ENCODE measurements at regions of chr17 and their contacts with region 1.

Region 1: DNA sequence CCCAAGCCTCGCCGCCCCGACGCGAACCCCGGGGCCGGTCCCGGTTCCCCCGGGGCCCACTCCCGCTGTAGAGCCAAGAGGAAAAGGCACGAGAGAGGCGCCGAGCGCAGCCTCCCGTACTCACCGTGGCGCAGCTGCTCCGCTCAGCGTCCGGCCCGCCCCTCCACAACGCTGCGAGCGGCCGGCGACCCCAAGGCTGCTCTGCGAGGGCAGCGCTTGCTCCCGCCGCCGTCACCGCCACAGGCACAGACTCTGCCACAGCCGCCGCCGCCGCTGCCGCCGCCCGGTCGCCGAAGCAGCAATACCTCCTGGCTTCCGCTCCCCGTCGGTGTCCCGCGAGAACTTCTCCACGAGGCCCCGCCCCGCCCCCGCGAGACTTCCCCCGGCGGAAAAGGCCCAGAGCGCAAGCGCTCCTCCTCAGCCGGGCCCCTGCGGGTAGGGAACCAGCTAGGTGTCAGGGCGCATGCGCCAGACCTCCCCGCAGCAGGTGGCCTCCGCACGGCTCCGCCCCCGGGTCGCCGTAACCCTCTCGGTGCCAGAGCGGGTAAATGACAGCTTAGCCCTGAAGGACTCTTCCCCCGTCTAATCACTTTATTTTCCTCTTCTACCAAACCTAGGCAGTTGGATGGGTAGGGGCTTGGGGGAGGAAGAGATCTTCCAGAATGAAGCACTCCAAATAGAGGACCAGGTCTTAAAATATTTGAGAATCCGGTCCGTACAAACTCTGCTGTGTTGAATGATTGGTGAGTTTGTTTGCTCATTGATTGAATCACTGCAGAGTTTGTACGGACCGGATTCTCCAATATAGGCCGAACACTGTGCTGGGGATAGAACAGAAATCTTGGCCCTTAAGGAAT is at the start of gene GRB2:
- DNase-seq: peak; percentile 100
- H3K4me3 Mint-ChIP-seq: peak within 1 kb of the TSS; percentile 94
- H3K27ac Mint-ChIP-seq: peak within 1 kb of the TSS; percentile 94
- H3K4me1 Mint-ChIP-seq: peaks cover 40% of the 10 kb centered on the region
- H3K27me3 Mint-ChIP-seq: no peaks in the 10 kb centered on the region
- total RNA-seq, gene GRB2: 172 and 182 TPM in 2 replicates

Region 2: DNA sequence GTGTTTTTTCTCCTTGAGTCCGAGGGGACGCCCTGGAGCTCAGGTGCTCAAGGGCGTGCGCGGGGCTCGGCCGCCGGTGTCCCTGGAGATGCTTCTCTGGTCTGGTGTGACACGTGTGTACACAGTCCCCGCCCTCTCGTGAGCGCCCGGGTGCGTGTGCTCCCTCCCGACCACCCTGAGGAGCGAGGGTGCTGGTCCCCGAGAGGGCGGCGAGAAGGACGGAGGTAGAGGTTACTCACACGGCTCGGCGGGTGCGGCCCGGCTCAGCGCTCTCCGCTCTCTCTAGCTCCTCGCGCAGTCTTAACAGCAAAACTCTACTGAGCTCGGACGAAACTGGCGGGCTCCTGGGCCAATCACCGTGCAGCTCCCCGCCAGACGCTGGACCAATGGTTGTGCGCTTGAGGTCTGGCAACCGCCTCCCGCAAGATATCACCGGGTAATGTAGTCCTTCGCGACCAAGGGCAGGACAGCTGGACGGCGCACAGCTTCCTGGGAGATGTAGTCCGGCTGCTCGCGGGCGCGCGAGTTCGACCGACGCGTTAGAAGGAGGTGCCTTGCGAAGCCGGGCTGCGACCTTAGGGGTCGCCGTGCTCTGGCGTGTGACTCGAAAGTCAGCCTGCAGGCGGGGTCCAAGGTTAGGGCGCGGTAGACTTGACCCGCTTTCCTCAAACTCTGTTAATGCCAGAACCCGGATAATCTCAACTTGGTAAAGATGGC is 116.3 kb before region 1 on chr17 and contains the start of gene SLC25A19:
- intact Hi-C with region 1: loop called (anchors 1 kb)
- DNase-seq: peak; percentile 99
- H3K4me3 Mint-ChIP-seq: peak within 1 kb of the TSS; percentile 100
- H3K27ac Mint-ChIP-seq: peak within 1 kb of the TSS; percentile 100
- H3K4me1 Mint-ChIP-seq: peaks cover 19% of the 10 kb centered on the region
- H3K27me3 Mint-ChIP-seq: no peaks in the 10 kb centered on the region
- total RNA-seq, gene SLC25A19: 131 and 132 TPM in 2 replicates

Region 3: DNA sequence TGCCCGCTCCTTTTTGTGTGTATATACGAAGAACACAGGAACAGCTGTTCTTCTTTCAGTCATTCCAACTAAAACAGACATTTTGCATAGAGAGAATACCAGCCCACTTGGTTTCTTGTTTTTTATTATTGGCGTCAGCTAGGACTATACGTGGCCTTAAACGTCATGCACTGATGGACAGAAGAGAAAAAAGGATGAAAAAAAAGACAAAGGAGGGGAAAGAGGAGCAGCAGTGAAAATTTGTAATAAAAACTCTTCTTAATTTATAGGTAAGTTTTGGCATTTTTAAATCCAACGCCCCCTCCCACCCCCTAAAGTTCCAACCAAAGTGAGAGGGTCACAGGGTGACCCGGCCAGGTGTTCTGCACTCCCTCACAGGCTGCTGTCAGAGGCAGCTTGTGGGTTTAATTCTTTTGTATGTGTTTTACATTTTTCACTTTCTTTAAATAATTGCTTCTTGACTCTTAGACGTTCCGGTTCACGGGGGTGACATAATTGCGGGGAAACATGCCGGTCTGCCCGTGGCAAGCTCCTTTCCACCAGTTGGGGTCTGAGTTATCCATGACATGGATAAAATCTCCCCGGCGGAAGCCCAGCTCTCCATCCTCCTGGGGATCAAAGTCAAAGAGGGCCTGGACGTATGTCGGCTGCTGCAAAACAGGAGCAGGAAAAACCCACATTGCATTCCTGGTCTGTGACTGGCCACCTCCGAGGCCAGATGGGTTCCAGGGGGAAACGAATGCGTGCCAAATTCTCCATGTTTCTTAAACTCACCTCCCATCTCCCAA is 85.5 kb before region 1 on chr17:
- intact Hi-C with region 1: loop called (anchors 1 kb)
- DNase-seq: no peak
- H3K4me3 Mint-ChIP-seq: no peak overlapping the region
- H3K27ac Mint-ChIP-seq: no peak overlapping the region
- H3K4me1 Mint-ChIP-seq: peaks cover 14% of the 10 kb centered on the region
- H3K27me3 Mint-ChIP-seq: no peaks in the 10 kb centered on the region

Region 4: GRCh38 chr17:75367317-75367716 is 38.3 kb before region 1 on chr17:
- intact Hi-C with region 1: loop called (anchors 5 kb)
- DNase-seq: no peak
- H3K4me3 Mint-ChIP-seq: peak overlapping the region; percentile 28
- H3K27ac Mint-ChIP-seq: peak overlapping the region; percentile 59
- H3K4me1 Mint-ChIP-seq: peaks cover 80% of the 10 kb centered on the region
- H3K27me3 Mint-ChIP-seq: no peaks in the 10 kb centered on the region

Region 5: GRCh38 chr17:75428543-75429469 is 23.2 kb after region 1 on chr17:
- intact Hi-C with region 1: no loop called
- DNase-seq: no peak
- H3K4me3 Mint-ChIP-seq: no peak overlapping the region
- H3K27ac Mint-ChIP-seq: no peak overlapping the region
- H3K4me1 Mint-ChIP-seq: peaks cover 14% of the 10 kb centered on the region
- H3K27me3 Mint-ChIP-seq: peaks cover 15% of the 10 kb centered on the region